ENCODE measurements at regions of chr17 and their contacts with region 1.

Region 1: GRCh38 chr17:39612291-39612894 is 4.7 kb upstream of the NEUROD2 start:
- DNase-seq: no peak
- H3K4me3 ChIP-seq: no peak overlapping the region
- CTCF ChIP-seq: no peak
- POLR2A ChIP-seq: no peak

Region 2: DNA sequence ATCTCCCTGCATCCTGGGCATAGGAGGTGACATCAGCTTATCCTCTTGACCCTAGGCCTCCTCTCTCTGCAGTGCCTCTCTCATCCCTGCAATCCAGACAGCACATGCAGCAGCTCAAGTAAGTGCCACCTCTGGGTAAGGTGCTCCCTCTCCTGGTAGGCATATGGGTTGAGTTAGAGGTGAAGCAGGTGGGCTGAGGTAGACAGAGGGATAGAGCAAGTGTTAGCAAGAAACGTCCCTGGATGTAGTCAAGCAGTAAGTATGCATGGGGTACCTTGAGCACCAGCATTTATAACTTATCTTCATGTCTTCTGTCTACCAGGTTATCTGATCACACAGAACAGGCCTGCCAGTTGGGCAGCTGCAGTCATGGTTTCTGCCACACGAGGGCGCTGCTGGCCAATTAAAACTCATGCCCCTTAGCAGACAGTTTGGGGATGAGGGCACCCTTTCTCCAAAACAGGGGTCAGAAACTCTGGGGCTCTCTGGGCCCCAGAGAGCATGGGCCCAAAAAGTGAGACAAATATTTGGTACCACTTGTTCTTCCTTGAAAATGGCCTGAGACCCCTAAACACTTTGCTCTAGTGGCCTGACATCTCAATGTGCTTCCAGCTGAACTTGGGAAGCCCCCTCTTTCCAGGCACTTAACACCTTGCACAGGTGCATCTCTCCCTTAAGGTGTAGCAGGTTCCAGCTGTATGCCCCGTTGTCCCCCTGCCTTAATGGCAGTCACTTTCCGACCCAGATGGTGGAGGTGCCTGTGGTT is 64.5 kb before region 1 on chr17:
- intact Hi-C with region 1: loop called (anchors 5 kb)
- DNase-seq: peak; percentile 67 to 95
- H3K4me3 ChIP-seq: no peak overlapping the region
- CTCF ChIP-seq: peak in 1 of 3 donors; percentile 52
- POLR2A ChIP-seq: no peak